Esophagus muscularis mucosa (tissue), 4 donors: ENCODE measurements at regions of chr16 and their contacts with region 1.

Region 1: GRCh38 chr16:85717393-85718121 is 28.8 kb upstream of the GINS2 start:
- DNase-seq: no peak
- H3K4me3 ChIP-seq: no peak overlapping the region
- H3K27ac ChIP-seq: no peak overlapping the region
- H3K4me1 ChIP-seq: peaks cover 13 to 29% (median 23%) of the 10 kb centered on the region in 4 donors
- H3K27me3 ChIP-seq: peaks cover 0 to 9% (median 0%) of the 10 kb centered on the region in 4 donors
- CTCF ChIP-seq: peak; percentile 68 to 71 (median 69)
- EP300 ChIP-seq: no peak
- POLR2A ChIP-seq: no peak

Region 2: DNA sequence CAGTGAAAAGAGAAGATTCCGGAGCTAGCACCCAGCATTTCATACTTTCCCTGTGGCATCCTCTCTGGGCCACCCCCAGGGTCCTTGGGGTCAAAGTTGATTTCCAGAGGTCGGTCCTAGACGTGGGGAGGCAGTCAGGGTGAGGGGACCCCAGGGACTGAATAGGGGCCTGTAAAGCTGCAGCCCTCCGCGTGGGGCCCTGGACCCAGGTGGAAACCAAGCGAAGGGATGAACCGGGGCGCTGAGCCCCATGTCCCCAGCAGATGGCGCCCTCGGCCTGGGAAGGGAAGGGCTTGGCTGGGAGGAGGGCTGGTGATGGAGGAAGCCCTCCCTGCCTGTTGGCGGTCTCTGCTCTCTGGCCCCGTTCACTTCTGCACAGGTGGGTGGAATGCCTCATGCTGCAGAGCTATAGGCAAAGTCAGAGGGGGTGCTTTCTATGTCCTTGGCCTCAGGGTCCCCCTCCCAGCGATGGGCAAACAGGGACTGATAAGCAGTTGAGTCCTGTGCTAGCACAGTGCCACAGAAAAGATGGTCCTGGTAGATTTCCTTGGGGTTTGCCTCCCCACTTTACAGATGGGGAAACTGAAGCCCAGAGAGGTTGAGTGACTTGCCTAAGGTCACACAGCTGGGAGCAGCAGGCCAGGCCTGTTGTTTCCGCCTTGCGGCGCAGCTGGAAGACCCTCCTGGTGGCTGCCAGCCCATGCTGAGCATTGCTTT is 441.9 kb before region 1 on chr16:
- intact Hi-C with region 1: loop called (anchors 10 kb)
- DNase-seq: no peak
- H3K4me3 ChIP-seq: no peak overlapping the region
- H3K27ac ChIP-seq: no peak overlapping the region
- H3K4me1 ChIP-seq: peaks cover 0 to 9% (median 1%) of the 10 kb centered on the region in 4 donors
- H3K27me3 ChIP-seq: no peaks in the 10 kb centered on the region
- CTCF ChIP-seq: peak; percentile 65 to 89 (median 75)
- EP300 ChIP-seq: no peak
- POLR2A ChIP-seq: no peak

Region 3: GRCh38 chr16:85305996-85306792 is 411.4 kb before region 1 on chr16:
- intact Hi-C with region 1: loop called (anchors 10 kb)
- DNase-seq: peak; percentile 98
- H3K4me3 ChIP-seq: no peak overlapping the region
- H3K27ac ChIP-seq: peak overlapping the region in 1 of 4 donors; percentile 50
- H3K4me1 ChIP-seq: peaks cover 38 to 95% (median 79%) of the 10 kb centered on the region in 4 donors
- H3K27me3 ChIP-seq: no peaks in the 10 kb centered on the region
- CTCF ChIP-seq: no peak
- EP300 ChIP-seq: no peak
- POLR2A ChIP-seq: no peak

Region 4: GRCh38 chr16:85659805-85660495 is 57.6 kb before region 1 on chr16:
- intact Hi-C with region 1: loop called (anchors 1 kb)
- DNase-seq: no peak
- H3K4me3 ChIP-seq: no peak overlapping the region
- H3K27ac ChIP-seq: peak overlapping the region; percentile 9 to 50 (median 32)
- H3K4me1 ChIP-seq: peaks cover 13 to 14% (median 14%) of the 10 kb centered on the region in 4 donors
- H3K27me3 ChIP-seq: no peaks in the 10 kb centered on the region
- CTCF ChIP-seq: peak; percentile 82 to 92 (median 83)
- EP300 ChIP-seq: no peak
- POLR2A ChIP-seq: no peak

Region 5: DNA sequence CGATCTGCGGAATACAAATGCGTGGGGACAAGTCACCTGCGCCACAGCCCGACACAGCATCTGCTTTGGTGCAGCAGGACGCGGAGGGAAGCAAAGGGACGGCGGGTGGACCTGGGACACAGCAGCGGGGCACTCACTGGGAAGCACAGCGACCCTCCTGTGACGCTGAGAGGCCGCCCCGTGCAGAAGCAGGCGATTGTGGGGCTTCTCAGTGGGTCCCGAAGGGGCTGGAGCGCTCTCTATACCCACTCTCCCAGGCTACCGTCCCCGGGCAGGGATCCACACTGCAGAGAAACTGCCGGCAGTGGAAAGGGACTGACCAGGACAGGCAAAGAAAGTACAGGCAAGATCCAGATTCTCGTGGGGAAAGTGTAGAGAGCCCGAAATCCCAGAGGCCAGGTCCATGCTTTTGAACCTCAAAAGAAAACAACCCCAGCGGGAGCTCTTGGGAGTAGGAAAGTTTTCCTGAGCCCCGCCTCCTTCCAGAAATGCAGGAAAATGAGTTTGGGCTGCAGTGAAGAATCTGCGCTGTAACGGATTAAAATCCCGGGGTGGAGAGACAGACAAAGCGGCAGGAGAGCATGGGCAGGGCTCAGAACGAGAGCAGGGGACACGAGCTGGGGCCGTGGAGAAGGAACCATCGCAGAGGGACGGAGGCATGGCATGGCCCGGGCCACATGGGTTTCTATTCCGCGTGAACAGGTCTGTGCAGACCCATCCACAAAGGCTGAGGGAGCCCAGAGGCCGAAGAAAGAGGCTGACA is 94.7 kb after region 1 on chr16:
- intact Hi-C with region 1: no loop called
- DNase-seq: no peak
- H3K4me3 ChIP-seq: no peak overlapping the region
- H3K27ac ChIP-seq: no peak overlapping the region
- H3K4me1 ChIP-seq: peaks cover 0 to 8% (median 0%) of the 10 kb centered on the region in 4 donors
- H3K27me3 ChIP-seq: peaks cover 0 to 22% (median 0%) of the 10 kb centered on the region in 4 donors
- CTCF ChIP-seq: no peak
- EP300 ChIP-seq: no peak
- POLR2A ChIP-seq: no peak

Region 6: GRCh38 chr16:85928401-85928820 is 210.9 kb after region 1 on chr16:
- intact Hi-C with region 1: no loop called
- DNase-seq: no peak
- H3K4me3 ChIP-seq: no peak overlapping the region
- H3K27ac ChIP-seq: no peak overlapping the region
- H3K4me1 ChIP-seq: peaks cover 0 to 29% (median 16%) of the 10 kb centered on the region in 4 donors
- H3K27me3 ChIP-seq: peaks cover 0 to 38% (median 2%) of the 10 kb centered on the region in 4 donors
- CTCF ChIP-seq: no peak
- EP300 ChIP-seq: no peak
- POLR2A ChIP-seq: no peak